ENCODE measurements at regions of chr7 and their contacts with region 1.

Region 1: GRCh38 chr7:97117372-97118188 is at the start of gene SDHAF3:
- DNase-seq: peak; percentile 97 to 99 (median 98)
- ATAC-seq: peak; percentile 94
- H3K4me3 ChIP-seq: peak within 1 kb of the TSS; percentile 70 to 87
- H3K4me3 Mint-ChIP-seq: peak within 1 kb of the TSS; percentile 97
- H3K27ac ChIP-seq: peak within 1 kb of the TSS; percentile 66 to 83
- H3K27ac Mint-ChIP-seq: peak within 1 kb of the TSS; percentile 96
- H3K4me1 ChIP-seq: peaks cover 15% of the 10 kb centered on the region
- H3K4me1 Mint-ChIP-seq: peaks cover 46% of the 10 kb centered on the region
- H3K27me3 ChIP-seq: no peaks in the 10 kb centered on the region
- H3K27me3 Mint-ChIP-seq: peaks cover 1% of the 10 kb centered on the region
- CTCF ChIP-seq: no peak
- total RNA-seq, gene SDHAF3: 3.5 to 4.6 TPM

Region 2: DNA sequence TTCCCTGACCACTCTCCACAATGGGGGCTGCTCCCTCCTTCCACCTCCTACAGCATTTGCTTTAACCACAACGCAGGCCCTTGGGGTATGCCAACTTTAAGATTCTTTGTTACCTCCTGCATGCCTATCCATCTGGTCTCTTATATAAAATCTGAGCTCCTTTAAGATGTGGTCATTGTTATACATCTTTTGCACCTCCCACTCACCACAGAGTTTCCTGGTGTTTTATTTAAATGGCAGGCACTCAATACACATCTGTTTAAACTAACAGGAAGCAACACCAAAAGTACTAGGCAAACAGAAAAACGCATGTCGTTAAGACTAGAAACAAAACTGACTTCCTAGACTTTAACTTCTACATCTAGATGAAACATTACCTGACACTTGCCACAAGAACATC is 832.0 kb before region 1 on chr7:
- CTCF ChIA-PET with region 1: no interaction called
- POLR2A ChIA-PET with region 1: no interaction called
- intact Hi-C with region 1: loop called in 1 of 2 experiments (anchors 10 kb)
- DNase-seq: peak in 5 of 9 experiments; percentile 5 to 77 (median 30)
- ATAC-seq: peak; percentile 89
- H3K4me3 ChIP-seq: no peak overlapping the region
- H3K4me3 Mint-ChIP-seq: peak overlapping the region; percentile 33
- H3K27ac ChIP-seq: peak overlapping the region; percentile 3 to 77
- H3K27ac Mint-ChIP-seq: peak overlapping the region; percentile 88
- H3K4me1 ChIP-seq: peaks cover 19% of the 10 kb centered on the region
- H3K4me1 Mint-ChIP-seq: peaks cover 44% of the 10 kb centered on the region
- H3K27me3 ChIP-seq: no peaks in the 10 kb centered on the region
- H3K27me3 Mint-ChIP-seq: no peaks in the 10 kb centered on the region
- CTCF ChIP-seq: no peak

Region 3: GRCh38 chr7:96709381-96710228 is 408.0 kb before region 1 on chr7 and contains the start of gene SEM1:
- CTCF ChIA-PET with region 1: no interaction called
- POLR2A ChIA-PET with region 1: no interaction called
- intact Hi-C with region 1: loop called (anchors 1 to 5 kb)
- DNase-seq: peak; percentile 23 to 85 (median 61)
- ATAC-seq: peak; percentile 84
- H3K4me3 ChIP-seq: peak within 1 kb of the TSS; percentile 71 to 94
- H3K4me3 Mint-ChIP-seq: peak within 1 kb of the TSS; percentile 99
- H3K27ac ChIP-seq: peak within 1 kb of the TSS; percentile 67 to 92
- H3K27ac Mint-ChIP-seq: peak within 1 kb of the TSS; percentile 99
- H3K4me1 ChIP-seq: peaks cover 18% of the 10 kb centered on the region
- H3K4me1 Mint-ChIP-seq: peaks cover 39% of the 10 kb centered on the region
- H3K27me3 ChIP-seq: no peaks in the 10 kb centered on the region
- H3K27me3 Mint-ChIP-seq: no peaks in the 10 kb centered on the region
- CTCF ChIP-seq: no peak
- total RNA-seq, gene SEM1: 14.7 to 15.6 TPM

Region 4: DNA sequence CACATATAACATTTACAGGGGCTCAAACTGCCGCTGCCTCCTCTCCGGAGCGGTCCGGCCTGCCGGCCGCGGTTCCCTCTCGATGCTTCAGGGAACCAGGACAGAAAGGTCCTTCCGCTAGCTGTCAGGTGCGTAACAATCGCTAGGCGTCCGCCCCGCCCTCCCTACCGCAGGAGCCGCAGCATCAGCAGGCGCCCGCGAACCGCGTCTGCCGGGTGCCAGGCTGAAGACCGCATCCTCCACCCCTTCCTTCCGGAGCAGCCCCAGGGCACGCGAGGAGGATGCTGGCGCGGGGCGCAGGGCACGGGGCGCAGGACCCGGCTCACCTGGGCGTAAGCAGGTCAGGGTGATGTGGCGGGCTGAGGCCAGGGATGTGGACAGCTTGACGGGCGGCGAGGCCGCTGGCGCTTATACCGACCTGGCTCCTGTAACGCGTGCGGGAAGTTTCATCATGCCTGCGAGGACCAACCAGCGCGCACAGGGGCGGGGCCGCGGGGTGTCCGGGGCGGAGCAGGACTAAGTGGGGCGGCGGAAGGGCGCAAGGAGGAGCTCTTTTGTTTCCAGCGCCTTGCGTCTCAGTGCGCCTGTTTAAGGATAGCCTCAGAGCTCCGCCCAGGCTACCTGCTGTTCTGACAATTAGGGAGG is 754.6 kb after region 1 on chr7 and contains the start of gene ASNS:
- CTCF ChIA-PET with region 1: no interaction called
- POLR2A ChIA-PET with region 1: interaction called, 3 read pairs
- intact Hi-C with region 1: loop called in 1 of 2 experiments (anchors 1 kb)
- DNase-seq: peak; percentile 62 to 91 (median 78)
- ATAC-seq: peak; percentile 80
- H3K4me3 ChIP-seq: peak within 1 kb of the TSS; percentile 55 to 64
- H3K4me3 Mint-ChIP-seq: peak within 1 kb of the TSS; percentile 87
- H3K27ac ChIP-seq: peak within 1 kb of the TSS; percentile 58 to 75
- H3K27ac Mint-ChIP-seq: peak within 1 kb of the TSS; percentile 91
- H3K4me1 ChIP-seq: peaks cover 12% of the 10 kb centered on the region
- H3K4me1 Mint-ChIP-seq: peaks cover 13% of the 10 kb centered on the region
- H3K27me3 ChIP-seq: no peaks in the 10 kb centered on the region
- H3K27me3 Mint-ChIP-seq: no peaks in the 10 kb centered on the region
- CTCF ChIP-seq: no peak
- total RNA-seq, gene ASNS: 11.1 to 13.6 TPM

Region 5: DNA sequence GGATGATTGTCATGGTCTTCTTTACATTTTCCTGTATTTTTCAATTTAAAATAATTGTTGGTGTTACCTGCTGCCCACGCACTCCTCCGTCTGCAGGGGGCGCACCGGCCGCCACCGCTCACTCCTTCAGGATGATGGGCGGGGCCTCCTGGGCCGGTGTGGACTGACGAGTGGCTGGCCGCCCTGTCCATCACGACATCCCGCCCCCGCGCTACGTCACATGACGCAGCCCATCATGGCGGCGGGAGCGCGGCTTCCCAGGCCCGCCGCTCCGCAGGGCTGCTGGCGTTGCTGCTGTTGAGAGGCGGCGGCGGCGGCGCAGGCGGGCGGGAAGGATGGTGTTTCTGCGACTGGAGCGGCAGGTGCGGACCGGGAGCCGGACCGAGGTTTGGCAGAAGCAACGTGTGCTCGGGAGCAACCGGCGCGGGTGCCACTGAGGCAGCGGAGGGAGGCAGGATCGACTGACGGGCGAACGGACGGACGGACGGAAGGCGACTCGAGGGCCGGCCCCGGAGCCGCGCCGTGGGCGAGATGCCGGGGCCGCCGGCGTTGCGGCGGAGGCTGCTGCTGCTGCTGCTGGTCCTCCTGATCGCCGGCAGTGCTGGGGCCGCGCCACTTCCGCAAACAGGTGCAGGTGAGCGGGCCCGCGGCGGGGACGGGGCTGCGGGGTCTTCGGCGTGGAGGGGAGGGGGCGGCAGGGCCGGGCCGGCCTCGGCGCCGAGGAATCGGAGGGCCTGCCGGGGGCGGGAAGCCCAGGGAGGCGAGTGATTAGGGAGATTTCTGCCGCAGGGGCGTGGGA is 989.3 kb after region 1 on chr7 and contains the start of gene LMTK2:
- CTCF ChIA-PET with region 1: no interaction called
- POLR2A ChIA-PET with region 1: no interaction called
- intact Hi-C with region 1: loop called in 1 of 2 experiments (anchors 2 kb)
- DNase-seq: peak; percentile 92 to 99 (median 96)
- ATAC-seq: peak; percentile 100
- H3K4me3 ChIP-seq: peak within 1 kb of the TSS; percentile 73 to 81
- H3K4me3 Mint-ChIP-seq: peak within 1 kb of the TSS; percentile 98
- H3K27ac ChIP-seq: peak within 1 kb of the TSS; percentile 65 to 77
- H3K27ac Mint-ChIP-seq: peak within 1 kb of the TSS; percentile 93
- H3K4me1 ChIP-seq: peaks cover 11% of the 10 kb centered on the region
- H3K4me1 Mint-ChIP-seq: peaks cover 47% of the 10 kb centered on the region
- H3K27me3 ChIP-seq: no peaks in the 10 kb centered on the region
- H3K27me3 Mint-ChIP-seq: peaks cover 10% of the 10 kb centered on the region
- CTCF ChIP-seq: peak; percentile 79
- total RNA-seq, gene LMTK2: 33.5 to 33.8 TPM

Region 6: DNA sequence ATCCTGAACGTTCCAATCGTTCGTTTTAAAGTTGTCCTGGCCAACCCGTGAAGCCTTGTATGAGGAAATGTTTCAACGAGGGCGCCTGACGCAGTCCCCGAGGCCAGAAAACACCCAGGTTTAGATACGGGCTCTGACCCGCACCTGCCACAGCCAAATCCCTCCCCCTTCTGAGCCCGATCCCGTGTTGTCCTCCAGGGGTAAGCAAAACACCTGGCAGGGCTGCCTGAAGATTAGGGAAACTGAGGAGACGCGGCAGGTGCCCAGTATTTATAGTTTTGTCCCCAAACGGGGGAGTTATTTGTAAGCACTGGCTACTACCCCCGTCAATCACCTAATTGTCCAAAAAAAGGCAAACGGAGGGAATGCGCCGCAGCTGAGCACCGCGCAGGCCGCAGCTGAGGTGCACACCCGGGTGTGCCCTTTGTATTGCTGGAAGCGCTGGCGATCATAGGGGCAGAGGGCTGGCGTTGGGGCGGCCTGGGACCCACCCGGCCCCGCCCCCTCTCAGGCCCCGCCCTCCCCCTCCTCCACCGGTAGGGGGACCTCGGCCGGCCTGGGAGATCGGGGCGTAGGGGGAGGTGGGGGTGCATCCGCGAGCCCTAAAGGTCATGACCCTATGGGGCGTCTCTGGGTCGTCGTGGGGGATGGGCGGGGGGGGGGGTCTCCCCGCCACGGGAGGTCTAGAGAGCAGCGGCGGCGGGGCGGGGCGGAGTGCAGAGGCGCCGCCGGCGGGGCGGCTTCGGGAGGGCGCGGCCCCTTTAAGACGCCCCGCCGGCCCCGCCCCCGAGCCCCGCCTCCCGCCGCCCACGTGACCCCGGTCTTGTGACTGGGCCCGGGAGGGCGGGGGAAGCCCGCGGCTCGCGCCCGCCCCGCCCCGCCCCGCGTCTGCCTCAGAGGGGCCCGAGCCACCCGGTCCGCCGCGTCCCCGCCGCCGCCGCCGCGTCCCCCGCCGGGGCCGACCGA is 1163.5 kb after region 1 on chr7 and contains the start of gene BRI3:
- CTCF ChIA-PET with region 1: no interaction called
- POLR2A ChIA-PET with region 1: no interaction called
- intact Hi-C with region 1: loop called (anchors 5 kb)
- DNase-seq: peak; percentile 86 to 95 (median 92)
- ATAC-seq: peak; percentile 81
- H3K4me3 ChIP-seq: peak within 1 kb of the TSS; percentile 72 to 88
- H3K4me3 Mint-ChIP-seq: peak within 1 kb of the TSS; percentile 91
- H3K27ac ChIP-seq: peak within 1 kb of the TSS; percentile 62 to 67
- H3K27ac Mint-ChIP-seq: peak within 1 kb of the TSS; percentile 90
- H3K4me1 ChIP-seq: peaks cover 42% of the 10 kb centered on the region
- H3K4me1 Mint-ChIP-seq: peaks cover 33% of the 10 kb centered on the region
- H3K27me3 ChIP-seq: no peaks in the 10 kb centered on the region
- H3K27me3 Mint-ChIP-seq: no peaks in the 10 kb centered on the region
- CTCF ChIP-seq: no peak
- total RNA-seq, gene BRI3: 70.6 to 70.8 TPM

Measured in CD8-positive, alpha-beta T cell (primary cell).